K562 (cell line): ENCODE measurements at regions of chr19 and their contacts with region 1.

Region 1: GRCh38 chr19:7808133-7808532 is 21.9 kb upstream of the EVI5L start:
- DNase-seq: no peak
- ATAC-seq: no peak
- H3K4me3 ChIP-seq: no peak overlapping the region
- H3K27ac ChIP-seq: no peak overlapping the region
- H3K4me1 ChIP-seq: no peaks in the 10 kb centered on the region; a peak in 1 of 5 replicates
- H3K27me3 ChIP-seq: peaks cover 7 to 22% of the 10 kb centered on the region in 2 experiments; a peak in 4 of 5 replicates
- CTCF ChIP-seq: no peak
- EP300 ChIP-seq: no peak
- POLR2A ChIP-seq: no peak
- RAD21 ChIP-seq: no peak

Region 2: DNA sequence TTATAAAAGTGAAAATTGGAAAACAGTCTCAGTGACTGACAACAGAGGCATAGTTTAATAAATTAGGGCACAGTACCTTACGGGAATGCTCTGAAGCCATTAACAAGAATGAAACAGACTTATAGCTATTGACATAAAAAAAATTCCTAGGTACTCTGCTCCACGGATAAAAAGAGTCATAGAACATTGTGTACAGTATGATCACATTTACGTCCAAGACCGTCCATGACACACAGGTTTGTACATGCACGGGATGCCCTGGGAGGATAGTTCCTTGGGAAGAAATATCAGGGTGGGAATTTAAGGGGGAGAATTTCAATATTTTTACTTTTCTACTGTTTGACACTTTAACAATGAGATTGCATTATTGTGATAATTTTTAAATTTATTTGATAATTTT is 237.4 kb before region 1 on chr19:
- CTCF ChIA-PET with region 1: no interaction called
- POLR2A ChIA-PET with region 1: no interaction called
- in situ Hi-C with region 1: loop called (anchors 5 kb)
- intact Hi-C with region 1: no loop called
- DNase-seq: no peak
- ATAC-seq: no peak
- H3K4me3 ChIP-seq: no peak overlapping the region
- H3K27ac ChIP-seq: no peak overlapping the region
- H3K4me1 ChIP-seq: 0 out of 5 replicates have a peak, but pooled peaks cover 0 to 4% of the 10 kb centered on the region in 2 experiments
- H3K27me3 ChIP-seq: no peaks in the 10 kb centered on the region; a peak in 2 of 5 replicates
- CTCF ChIP-seq: no peak
- EP300 ChIP-seq: no peak
- POLR2A ChIP-seq: no peak
- RAD21 ChIP-seq: no peak